ENCODE measurements at regions of chr9 and their contacts with region 1.

Region 1: DNA sequence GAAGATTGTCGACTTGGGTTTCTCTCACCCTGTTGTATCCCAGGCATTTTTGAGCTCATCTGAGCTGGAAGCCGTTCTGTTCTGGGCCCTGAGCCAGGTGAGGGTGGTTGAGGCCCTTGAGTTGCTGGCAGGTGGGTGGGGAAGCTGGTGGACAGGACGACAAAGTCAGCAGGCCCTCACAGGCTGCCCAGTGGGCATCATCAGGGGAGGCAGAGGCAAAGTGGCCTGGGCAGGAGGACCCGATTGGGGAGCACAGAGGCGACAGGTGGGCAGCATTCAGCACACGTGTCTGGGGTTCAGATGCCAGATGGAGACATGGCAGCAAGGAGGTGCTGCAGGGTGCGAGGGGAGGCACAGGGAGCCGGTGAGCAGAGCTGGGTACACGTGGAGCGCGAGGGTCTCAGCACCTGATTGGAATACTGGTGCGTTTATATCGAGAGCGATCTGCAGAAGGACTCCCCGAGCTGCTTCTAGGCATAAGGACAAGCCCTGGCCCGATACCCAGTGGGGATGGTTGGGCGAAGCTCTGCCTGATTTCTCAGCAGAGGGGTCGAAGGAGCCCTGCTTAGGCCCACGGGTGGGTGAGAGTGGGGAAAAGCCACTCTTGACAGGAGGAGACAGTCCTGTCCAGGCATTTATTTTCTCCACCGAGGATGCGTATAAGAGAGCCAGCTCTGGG is 49.0 kb upstream of the SUSD3 start:
- DNase-seq: no peak
- ATAC-seq: no peak
- H3K4me3 ChIP-seq: no peak overlapping the region
- H3K27ac ChIP-seq: no peak overlapping the region
- H3K4me1 ChIP-seq: no peaks in the 10 kb centered on the region
- H3K27me3 ChIP-seq: no peaks in the 10 kb centered on the region

Region 2: GRCh38 chr9:93051680-93052089 is 42.2 kb after region 1 on chr9:
- intact Hi-C with region 1: loop called in 1 of 2 experiments (anchors 5 kb)
- DNase-seq: peak in 1 of 2 donors; percentile 78
- ATAC-seq: peak; percentile 84
- H3K4me3 ChIP-seq: no peak overlapping the region
- H3K27ac ChIP-seq: peak overlapping the region; percentile 65 to 99
- H3K4me1 ChIP-seq: peaks cover 0 to 5% of the 10 kb centered on the region in 2 donors
- H3K27me3 ChIP-seq: no peaks in the 10 kb centered on the region

Measured in aorta (tissue), 5 donors.